Activated CD4-positive, alpha-beta memory T cell treated with anti-CD3 and anti-CD28 coated beads for 36 hours (primary cell): ENCODE measurements at regions of chr12 and their contacts with region 1.

Region 1: GRCh38 chr12:123365025-123365917 is 624 bp upstream of the SBNO1 start:
- DNase-seq: peak; percentile 99
- H3K4me3 Mint-ChIP-seq: peak overlapping the region; percentile 88
- H3K27ac Mint-ChIP-seq: peak overlapping the region; percentile 99
- H3K4me1 Mint-ChIP-seq: peaks cover 11% of the 10 kb centered on the region
- H3K27me3 Mint-ChIP-seq: no peaks in the 10 kb centered on the region

Region 2: DNA sequence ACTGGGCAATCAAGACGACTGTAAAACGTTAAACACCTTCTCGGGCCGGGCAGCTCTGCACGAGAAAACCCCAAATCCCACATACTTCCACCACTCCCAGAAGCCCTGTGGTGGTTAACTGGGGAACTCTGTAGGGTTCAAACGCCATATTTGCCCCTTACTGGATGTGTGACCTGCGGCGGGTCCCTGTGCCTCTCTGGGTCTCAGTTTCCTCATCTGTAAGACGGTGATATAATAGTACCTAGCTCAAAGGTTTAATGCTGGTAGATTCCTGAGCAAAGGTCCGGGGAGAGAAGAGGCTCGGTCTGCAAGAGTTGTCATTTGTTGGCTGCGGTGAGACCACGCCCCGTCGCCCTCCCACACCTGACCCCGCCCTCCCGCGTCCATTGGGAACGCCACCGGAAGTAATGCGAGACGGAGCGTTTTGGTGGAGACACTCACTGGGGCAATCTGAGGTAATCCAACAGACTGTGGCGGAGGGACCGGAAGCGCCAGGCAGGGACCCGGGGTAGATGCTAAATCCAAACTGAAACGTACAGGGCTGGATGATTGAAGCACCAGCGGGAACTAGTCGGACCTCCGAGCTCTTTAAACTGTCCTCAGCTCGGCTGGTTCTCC is 390.9 kb before region 1 on chr12:
- CTCF ChIA-PET with region 1: no interaction called
- POLR2A ChIA-PET with region 1: no interaction called
- intact Hi-C with region 1: loop called (anchors 10 kb)
- DNase-seq: peak; percentile 100
- H3K4me3 Mint-ChIP-seq: peak overlapping the region; percentile 98
- H3K27ac Mint-ChIP-seq: peak overlapping the region; percentile 99
- H3K4me1 Mint-ChIP-seq: peaks cover 25% of the 10 kb centered on the region
- H3K27me3 Mint-ChIP-seq: no peaks in the 10 kb centered on the region

Region 3: GRCh38 chr12:123115409-123116121 is 249.7 kb before region 1 on chr12:
- CTCF ChIA-PET with region 1: no interaction called
- POLR2A ChIA-PET with region 1: no interaction called
- intact Hi-C with region 1: no loop called
- DNase-seq: no peak
- H3K4me3 Mint-ChIP-seq: no peak overlapping the region
- H3K27ac Mint-ChIP-seq: no peak overlapping the region
- H3K4me1 Mint-ChIP-seq: peaks cover 28% of the 10 kb centered on the region
- H3K27me3 Mint-ChIP-seq: no peaks in the 10 kb centered on the region

Region 4: GRCh38 chr12:123278101-123278627 is 87.1 kb before region 1 on chr12:
- CTCF ChIA-PET with region 1: no interaction called
- POLR2A ChIA-PET with region 1: interaction called, 5 read pairs
- intact Hi-C with region 1: loop called (anchors 2 kb)
- DNase-seq: peak; percentile 46
- H3K4me3 Mint-ChIP-seq: no peak overlapping the region
- H3K27ac Mint-ChIP-seq: peak overlapping the region; percentile 69
- H3K4me1 Mint-ChIP-seq: peaks cover 6% of the 10 kb centered on the region
- H3K27me3 Mint-ChIP-seq: no peaks in the 10 kb centered on the region

Region 5: GRCh38 chr12:123388177-123388947 is 23.1 kb after region 1 on chr12:
- CTCF ChIA-PET with region 1: interaction called, 28 read pairs
- POLR2A ChIA-PET with region 1: interaction called, 28 read pairs
- intact Hi-C with region 1: loop called (anchors 1 kb)
- DNase-seq: peak; percentile 86
- H3K4me3 Mint-ChIP-seq: peak overlapping the region; percentile 80
- H3K27ac Mint-ChIP-seq: peak overlapping the region; percentile 88
- H3K4me1 Mint-ChIP-seq: peaks cover 39% of the 10 kb centered on the region
- H3K27me3 Mint-ChIP-seq: no peaks in the 10 kb centered on the region

Region 6: GRCh38 chr12:123436017-123436964 is 71.0 kb after region 1 on chr12 and contains the start of gene RILPL2:
- CTCF ChIA-PET with region 1: no interaction called
- POLR2A ChIA-PET with region 1: interaction called, 5 read pairs
- intact Hi-C with region 1: loop called (anchors 1 kb)
- DNase-seq: peak; percentile 97
- H3K4me3 Mint-ChIP-seq: peak within 1 kb of the TSS; percentile 99
- H3K27ac Mint-ChIP-seq: peak within 1 kb of the TSS; percentile 98
- H3K4me1 Mint-ChIP-seq: peaks cover 30% of the 10 kb centered on the region
- H3K27me3 Mint-ChIP-seq: no peaks in the 10 kb centered on the region
- total RNA-seq, gene RILPL2: 15.4 to 16.6 TPM

Region 7: GRCh38 chr12:123633379-123634141 is 268.3 kb after region 1 on chr12 and contains the starts of genes EIF2B1 and GTF2H3:
- CTCF ChIA-PET with region 1: no interaction called
- POLR2A ChIA-PET with region 1: interaction called, 5 read pairs
- intact Hi-C with region 1: loop called (anchors 1 kb)
- DNase-seq: peak; percentile 99
- H3K4me3 Mint-ChIP-seq: peak within 1 kb of the TSS; percentile 97
- H3K27ac Mint-ChIP-seq: peak within 1 kb of the TSS; percentile 96
- H3K4me1 Mint-ChIP-seq: peaks cover 28% of the 10 kb centered on the region
- H3K27me3 Mint-ChIP-seq: no peaks in the 10 kb centered on the region
- total RNA-seq, gene EIF2B1: 51.7 to 61.9 TPM
- total RNA-seq, gene GTF2H3: 57.2 to 58.4 TPM